ENCODE measurements at regions of chr13 and their contacts with region 1.

Region 1: GRCh38 chr13:113142876-113143275 is 15.6 kb upstream of the PROZ start:
- DNase-seq: no peak
- ATAC-seq: no peak
- H3K4me3 ChIP-seq: no peak overlapping the region
- H3K27ac ChIP-seq: no peak overlapping the region
- H3K4me1 ChIP-seq: no peaks in the 10 kb centered on the region
- H3K27me3 ChIP-seq: peaks cover 4% of the 10 kb centered on the region; the same call in 1 of the 2 replicates
- CTCF ChIP-seq: no peak
- POLR2A ChIP-seq: no peak
- RAD21 ChIP-seq: no peak

Region 2: DNA sequence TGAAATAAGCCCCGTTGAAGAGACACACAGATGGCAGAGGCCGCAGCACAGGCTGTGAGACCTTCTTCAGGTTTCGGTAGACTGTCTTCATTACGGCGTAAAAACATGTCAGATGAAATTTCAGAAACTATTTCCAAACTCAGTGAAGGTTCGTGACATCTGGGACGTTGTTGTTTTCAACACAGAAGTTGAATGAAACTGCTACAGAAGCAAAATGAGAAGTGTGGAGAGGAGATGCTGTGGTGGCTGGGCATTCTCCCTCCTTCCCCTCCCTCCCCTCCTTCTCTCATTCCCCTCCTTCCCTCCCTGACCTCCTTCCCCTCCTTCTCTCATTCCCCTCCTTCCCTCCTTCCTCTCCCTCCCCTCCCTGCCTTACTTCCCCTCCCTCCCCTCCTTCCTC is 339.5 kb before region 1 on chr13:
- CTCF ChIA-PET with region 1: no interaction called
- POLR2A ChIA-PET with region 1: no interaction called
- dilution Hi-C with region 1: no loop called
- in situ Hi-C with region 1: no loop called
- intact Hi-C with region 1: no loop called
- DNase-seq: no peak
- ATAC-seq: no peak
- H3K4me3 ChIP-seq: no peak overlapping the region
- H3K27ac ChIP-seq: no peak overlapping the region
- H3K4me1 ChIP-seq: peaks cover 2% of the 10 kb centered on the region; the same call in 1 of the 2 replicates
- H3K27me3 ChIP-seq: no peaks in the 10 kb centered on the region
- CTCF ChIP-seq: no peak
- POLR2A ChIP-seq: no peak
- RAD21 ChIP-seq: no peak

Region 3: DNA sequence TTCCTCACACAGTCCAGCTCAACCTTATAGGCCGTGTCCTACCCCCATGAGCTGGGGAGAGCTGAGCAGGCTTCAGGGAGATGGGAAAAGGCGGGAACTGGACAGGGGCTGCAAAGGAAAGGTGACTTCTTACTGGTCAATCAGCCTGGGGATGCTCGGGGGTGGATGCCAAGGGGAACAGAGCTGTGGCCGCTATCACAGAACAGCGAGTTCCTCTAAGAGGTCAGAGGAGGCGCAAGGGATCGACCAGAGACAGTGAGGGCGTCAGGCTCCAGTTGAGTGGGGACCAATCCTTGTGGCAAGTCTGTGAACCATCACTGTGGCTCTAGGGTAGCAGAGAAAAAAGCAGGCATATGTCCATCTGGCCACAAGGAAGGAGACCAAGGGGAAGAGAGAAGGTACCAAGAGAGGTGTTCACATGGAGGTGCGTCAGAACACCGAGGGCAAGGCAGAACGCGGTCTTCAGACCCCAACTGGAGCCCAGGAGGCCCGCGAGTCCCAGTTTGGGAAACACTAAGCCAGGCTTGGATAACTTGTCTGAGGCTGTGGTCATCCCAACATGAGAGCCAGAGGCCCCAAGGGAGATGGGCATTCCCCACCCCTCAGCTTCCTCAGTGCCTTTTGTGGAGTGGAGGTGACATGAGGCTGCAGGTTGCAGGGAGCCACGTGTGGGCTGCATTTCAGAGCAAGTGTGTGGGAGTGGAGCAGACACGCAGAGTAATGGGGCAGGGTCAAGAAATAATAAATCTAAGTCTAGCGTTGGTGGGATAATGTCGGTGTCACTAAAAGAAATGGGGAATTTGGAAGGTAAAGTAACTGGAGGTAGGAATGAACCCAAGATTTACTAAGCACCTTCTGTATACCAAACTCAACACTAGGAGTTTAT is 16.4 kb before region 1 on chr13:
- CTCF ChIA-PET with region 1: interaction called, 10 read pairs
- POLR2A ChIA-PET with region 1: no interaction called
- dilution Hi-C with region 1: no loop called
- in situ Hi-C with region 1: no loop called
- intact Hi-C with region 1: no loop called
- DNase-seq: no peak
- ATAC-seq: no peak
- H3K4me3 ChIP-seq: no peak overlapping the region
- H3K27ac ChIP-seq: no peak overlapping the region
- H3K4me1 ChIP-seq: peaks cover 3% of the 10 kb centered on the region; the same call in 1 of the 2 replicates
- H3K27me3 ChIP-seq: peaks cover 11% of the 10 kb centered on the region
- CTCF ChIP-seq: no peak
- POLR2A ChIP-seq: no peak
- RAD21 ChIP-seq: no peak